ENCODE measurements at regions of chr2 and their contacts with region 1.

Region 1: DNA sequence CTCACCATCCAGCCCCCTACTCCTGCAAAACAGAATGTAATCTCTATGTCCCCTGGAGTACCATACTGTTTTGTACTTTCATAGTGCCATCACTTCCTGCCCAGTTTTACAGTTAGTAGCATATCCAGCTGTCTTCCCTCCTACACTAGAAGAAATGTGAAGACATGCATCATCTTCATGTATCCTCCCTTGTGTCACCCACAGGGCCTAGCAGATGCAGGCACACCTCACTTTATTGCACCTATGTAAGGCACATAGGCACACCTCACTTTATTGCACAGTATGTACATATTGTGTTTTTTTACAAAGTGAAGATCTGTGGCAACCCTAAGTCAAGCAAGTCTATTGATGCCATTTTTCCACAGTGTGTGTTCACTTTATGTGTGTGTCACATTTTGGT is 12.0 kb downstream of the DNAJC27 start:
- DNase-seq: no peak
- ATAC-seq: no peak
- H3K4me3 ChIP-seq: no peak overlapping the region
- H3K27ac ChIP-seq: no peak overlapping the region
- H3K4me1 ChIP-seq: no peaks in the 10 kb centered on the region
- H3K27me3 ChIP-seq: no peaks in the 10 kb centered on the region
- CTCF ChIP-seq: no peak

Region 2: GRCh38 chr2:24297663-24298062 is 662.1 kb before region 1 on chr2:
- CTCF ChIA-PET with region 1: no interaction called
- POLR2A ChIA-PET with region 1: no interaction called
- intact Hi-C with region 1: no loop called
- DNase-seq: no peak
- ATAC-seq: no peak
- H3K4me3 ChIP-seq: no peak overlapping the region
- H3K27ac ChIP-seq: no peak overlapping the region
- H3K4me1 ChIP-seq: no peaks in the 10 kb centered on the region
- H3K27me3 ChIP-seq: no peaks in the 10 kb centered on the region
- CTCF ChIP-seq: no peak

Region 3: DNA sequence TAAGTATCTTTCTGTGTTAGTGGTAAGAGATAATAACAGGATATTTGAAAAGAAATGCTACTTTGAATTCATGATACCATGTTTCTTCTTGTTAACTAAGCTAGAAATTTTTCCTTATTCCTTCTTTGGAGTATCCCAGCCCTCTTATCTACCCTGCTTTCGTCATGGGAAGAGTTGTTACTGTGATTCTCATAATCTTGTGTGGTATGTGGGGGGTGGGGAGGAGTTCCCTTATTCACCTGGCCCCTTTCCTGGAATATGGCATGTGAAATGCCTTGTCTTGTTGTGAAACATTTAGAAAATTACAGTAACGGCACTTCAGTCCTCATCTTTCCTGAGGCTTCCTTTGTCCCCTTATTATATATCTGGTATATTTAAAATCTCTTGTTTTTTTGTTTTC is 338.8 kb before region 1 on chr2:
- CTCF ChIA-PET with region 1: no interaction called
- POLR2A ChIA-PET with region 1: no interaction called
- intact Hi-C with region 1: loop called (anchors 10 kb)
- DNase-seq: no peak
- ATAC-seq: no peak
- H3K4me3 ChIP-seq: no peak overlapping the region
- H3K27ac ChIP-seq: no peak overlapping the region
- H3K4me1 ChIP-seq: no peaks in the 10 kb centered on the region
- H3K27me3 ChIP-seq: no peaks in the 10 kb centered on the region
- CTCF ChIP-seq: no peak